Activated B cell treated with CpG ODN at 0.5 μM for 24 hours (primary cell): ENCODE measurements at regions of chr9 and their contacts with region 1.

Region 1: DNA sequence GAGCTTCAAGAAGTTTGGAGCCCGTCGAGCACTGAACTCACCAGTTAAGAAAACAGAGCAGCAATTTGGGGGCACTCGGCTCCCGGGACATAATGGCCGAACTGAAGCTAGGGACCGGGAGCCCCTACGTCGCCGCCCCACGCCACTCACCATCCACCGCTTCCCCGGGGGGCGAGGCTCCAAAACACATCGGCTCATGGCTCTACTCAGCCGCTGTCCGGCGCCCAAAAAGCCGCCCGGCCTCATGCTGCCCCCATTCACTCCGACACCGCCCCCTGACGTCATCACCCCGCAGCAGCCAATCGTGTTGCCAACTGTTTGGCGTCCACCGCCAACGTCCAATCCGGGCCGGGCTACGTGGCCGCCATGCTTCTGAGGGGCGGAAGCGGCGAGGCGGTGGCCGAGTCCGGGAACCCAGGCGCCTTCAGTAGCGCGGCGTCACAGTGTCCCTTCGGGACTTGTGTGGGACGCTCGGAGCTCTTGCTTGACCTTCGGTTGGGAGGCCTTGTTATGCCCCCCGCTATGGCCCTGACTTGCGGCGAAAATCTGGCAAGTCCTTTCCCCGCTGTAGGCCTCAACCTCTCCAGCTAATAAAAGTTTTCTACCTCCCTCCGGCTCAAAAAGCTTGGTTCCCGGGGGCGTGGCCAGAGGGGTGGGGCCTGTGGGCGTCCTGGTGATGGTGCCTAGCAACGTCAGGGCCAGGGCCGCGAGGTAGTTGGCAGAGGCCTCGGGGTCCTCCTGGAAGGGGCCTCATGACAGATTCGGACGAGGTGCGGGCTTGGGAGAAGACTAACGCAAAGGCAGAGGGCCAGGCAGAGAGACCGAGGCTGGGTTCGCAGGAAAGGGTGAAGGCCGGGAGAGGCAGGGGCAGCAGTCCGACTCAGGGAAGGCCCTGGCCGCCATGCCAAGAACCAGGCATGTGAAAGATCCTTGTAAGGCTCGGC is at the starts of genes PTRH1 and TTC16:
- DNase-seq: peak; percentile 97
- ATAC-seq: peak; percentile 96
- H3K4me3 Mint-ChIP-seq: peak within 1 kb of the TSS; percentile 100
- H3K27ac Mint-ChIP-seq: peak within 1 kb of the TSS; percentile 92
- H3K4me1 Mint-ChIP-seq: peaks cover 21% of the 10 kb centered on the region
- H3K27me3 Mint-ChIP-seq: no peaks in the 10 kb centered on the region
- CTCF ChIP-seq: no peak
- total RNA-seq, gene PTRH1: 12.7 and 13.8 TPM in 2 replicates
- total RNA-seq, gene TTC16: not detected in 2 replicates

Region 2: DNA sequence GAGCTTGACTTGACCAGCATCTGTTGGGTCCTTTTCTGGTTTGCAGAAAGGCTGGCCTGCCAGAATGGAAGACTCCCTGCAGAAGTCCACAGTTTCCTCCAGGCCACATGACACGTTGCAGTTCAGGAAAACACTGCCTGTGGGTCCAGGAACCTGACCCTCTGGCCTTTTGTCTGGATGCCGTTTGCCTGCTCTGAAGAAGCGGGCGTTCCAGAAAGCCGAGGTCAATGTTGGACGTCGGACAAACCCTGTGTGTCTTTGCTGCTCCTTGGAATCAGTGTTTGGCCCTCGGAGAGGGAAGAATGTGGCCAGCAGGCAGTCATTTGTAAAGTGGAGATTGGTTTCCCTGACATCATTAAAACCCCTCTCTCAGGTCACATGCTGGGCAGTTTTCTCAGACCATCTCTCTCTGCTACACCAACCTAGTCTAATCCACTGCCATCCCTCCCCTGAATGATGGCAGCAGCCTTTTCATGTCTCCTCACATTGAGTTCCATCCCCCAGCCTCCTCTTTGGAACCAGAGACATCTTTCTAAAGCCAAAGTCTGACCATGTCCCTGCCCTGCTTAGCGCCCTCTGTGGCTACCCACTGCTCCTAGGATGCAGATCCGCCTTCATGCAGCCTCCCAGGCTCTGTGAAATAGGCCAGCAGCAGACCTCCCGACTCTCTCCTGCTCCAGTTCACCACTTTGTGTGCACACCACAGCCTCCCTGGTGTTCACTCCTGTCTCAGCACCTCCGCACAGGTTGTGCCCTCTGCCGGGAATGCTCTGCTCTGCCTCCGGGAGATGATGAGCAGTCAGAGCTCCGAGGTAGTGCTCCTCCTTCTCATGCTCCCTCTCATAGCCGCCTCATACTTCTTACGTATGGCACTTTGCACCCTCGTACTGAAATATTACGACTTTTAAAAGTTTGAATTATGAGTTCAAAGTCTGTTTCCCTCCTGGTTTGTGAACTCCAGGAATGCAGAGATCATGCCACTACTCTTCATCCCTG is 725.5 kb before region 1 on chr9:
- CTCF ChIA-PET with region 1: no interaction called
- POLR2A ChIA-PET with region 1: no interaction called
- intact Hi-C with region 1: no loop called
- DNase-seq: no peak
- ATAC-seq: no peak
- H3K4me3 Mint-ChIP-seq: no peak overlapping the region
- H3K27ac Mint-ChIP-seq: no peak overlapping the region
- H3K4me1 Mint-ChIP-seq: peaks cover 22% of the 10 kb centered on the region
- H3K27me3 Mint-ChIP-seq: no peaks in the 10 kb centered on the region
- CTCF ChIP-seq: no peak

Region 3: GRCh38 chr9:127698985-127699670 is 16.5 kb before region 1 on chr9:
- CTCF ChIA-PET with region 1: no interaction called
- POLR2A ChIA-PET with region 1: no interaction called
- intact Hi-C with region 1: loop called (anchors 1 kb)
- DNase-seq: peak; percentile 76
- ATAC-seq: peak; percentile 100
- H3K4me3 Mint-ChIP-seq: peak overlapping the region; percentile 83
- H3K27ac Mint-ChIP-seq: peak overlapping the region; percentile 78
- H3K4me1 Mint-ChIP-seq: peaks cover 16% of the 10 kb centered on the region
- H3K27me3 Mint-ChIP-seq: no peaks in the 10 kb centered on the region
- CTCF ChIP-seq: no peak

Region 4: DNA sequence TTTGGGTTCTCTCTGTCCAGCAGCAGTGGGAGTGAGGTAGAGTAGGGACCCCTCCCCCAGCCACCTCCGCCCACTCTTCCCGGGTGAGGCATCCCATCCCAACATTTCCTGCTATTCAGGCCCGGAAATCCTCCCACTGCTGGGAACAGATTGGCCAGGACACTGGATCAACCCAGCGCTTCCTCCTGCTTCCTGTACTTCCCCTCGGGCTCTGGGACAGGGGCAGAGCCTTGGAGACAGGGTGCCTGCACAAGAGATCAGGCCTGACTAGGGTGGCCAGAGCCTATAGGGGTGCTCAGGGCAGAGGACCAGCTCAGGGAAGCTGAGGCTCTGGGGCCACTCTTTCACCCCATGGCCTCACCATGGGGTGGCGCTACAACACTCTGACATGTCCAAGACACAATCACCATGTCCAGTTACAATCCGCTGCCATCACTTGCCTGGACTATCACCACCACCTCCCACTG is 48.3 kb after region 1 on chr9:
- CTCF ChIA-PET with region 1: no interaction called
- POLR2A ChIA-PET with region 1: no interaction called
- intact Hi-C with region 1: no loop called
- DNase-seq: no peak
- ATAC-seq: peak; percentile 51
- H3K4me3 Mint-ChIP-seq: no peak overlapping the region
- H3K27ac Mint-ChIP-seq: peak overlapping the region; percentile 60
- H3K4me1 Mint-ChIP-seq: peaks cover 61% of the 10 kb centered on the region
- H3K27me3 Mint-ChIP-seq: no peaks in the 10 kb centered on the region
- CTCF ChIP-seq: no peak

Region 5: DNA sequence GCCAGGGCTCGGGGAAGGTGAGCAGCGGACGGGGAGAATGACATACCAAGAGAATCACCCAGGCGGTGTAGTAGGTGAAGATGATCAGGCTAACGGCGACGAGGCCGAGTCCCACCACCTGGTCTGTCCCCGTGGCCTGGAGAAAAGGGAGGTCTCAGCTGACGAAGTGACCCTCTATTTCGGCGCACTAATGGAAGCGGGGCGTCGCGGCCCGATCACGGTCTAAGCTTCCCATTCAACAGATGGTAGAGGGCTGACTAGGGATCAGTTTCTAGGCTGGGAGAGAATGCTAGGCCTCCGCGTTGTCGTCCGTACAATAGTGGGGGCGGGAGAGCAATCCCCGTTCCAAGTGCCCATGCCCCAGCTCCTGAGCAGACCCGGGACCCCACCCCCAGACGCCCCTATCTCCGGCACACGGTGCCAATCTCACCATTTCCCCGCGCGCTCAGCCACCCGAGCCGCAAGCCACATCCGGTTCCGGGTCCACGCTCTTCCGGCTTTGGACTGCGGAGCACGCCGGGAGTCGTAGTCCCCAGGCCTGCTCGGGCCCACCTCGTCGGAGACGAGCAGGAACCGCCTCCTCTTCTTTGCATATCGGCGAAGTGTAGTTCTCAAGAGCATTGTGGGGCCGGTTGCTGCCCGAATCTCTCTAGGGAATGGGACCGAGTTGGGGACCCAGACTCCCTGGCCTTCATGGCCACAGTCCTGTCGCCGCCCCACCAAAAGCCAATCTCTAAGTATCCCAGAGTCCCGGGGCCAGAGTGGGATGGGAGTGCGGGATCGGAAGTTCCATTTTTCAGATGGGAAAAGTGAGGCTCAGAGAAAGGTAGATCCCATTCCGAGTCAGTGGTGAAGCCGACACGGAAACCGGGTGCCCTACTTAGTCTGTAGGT is 222.0 kb after region 1 on chr9 and contains the start of gene DPM2:
- CTCF ChIA-PET with region 1: no interaction called
- POLR2A ChIA-PET with region 1: no interaction called
- intact Hi-C with region 1: no loop called
- DNase-seq: peak; percentile 82
- ATAC-seq: peak; percentile 96
- H3K4me3 Mint-ChIP-seq: peak within 1 kb of the TSS; percentile 94
- H3K27ac Mint-ChIP-seq: peak within 1 kb of the TSS; percentile 94
- H3K4me1 Mint-ChIP-seq: peaks cover 37% of the 10 kb centered on the region
- H3K27me3 Mint-ChIP-seq: no peaks in the 10 kb centered on the region
- CTCF ChIP-seq: no peak
- total RNA-seq, gene DPM2: 41.4 and 50.6 TPM in 2 replicates